PC-3 (cell line): ENCODE measurements at regions of chr16 and their contacts with region 1.

Region 1: DNA sequence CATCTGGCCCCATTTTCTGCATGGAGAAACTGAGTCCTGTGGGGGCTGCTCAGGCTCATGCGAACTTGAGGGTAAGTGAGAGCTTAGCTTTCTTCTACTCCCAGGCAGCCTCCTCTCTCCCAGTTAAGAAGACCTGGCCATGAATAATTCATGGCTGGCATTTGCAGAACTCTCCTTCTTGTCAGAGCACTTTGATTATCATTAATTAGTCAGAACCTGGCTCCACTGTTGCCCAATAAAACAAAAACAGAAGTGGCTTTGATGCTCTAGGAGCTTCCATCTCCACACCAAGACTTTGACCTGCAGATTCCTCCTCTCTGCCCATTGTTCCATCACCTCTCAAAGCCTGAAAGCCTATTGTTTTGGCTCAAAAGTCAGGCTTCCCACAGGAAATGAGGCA is 45.5 kb upstream of the CDH3 start:
- DNase-seq: no peak
- ATAC-seq: no peak
- H3K4me3 ChIP-seq: no peak overlapping the region
- H3K27ac ChIP-seq: no peak overlapping the region
- H3K4me1 ChIP-seq: 0 out of 2 replicates have a peak, but pooled peaks cover 4% of the 10 kb centered on the region
- H3K27me3 ChIP-seq: no peaks in the 10 kb centered on the region
- CTCF ChIP-seq: no peak

Region 2: GRCh38 chr16:68575082-68575481 is 24.5 kb before region 1 on chr16:
- CTCF ChIA-PET with region 1: no interaction called
- POLR2A ChIA-PET with region 1: interaction called, 11 read pairs
- intact Hi-C with region 1: no loop called
- DNase-seq: no peak
- ATAC-seq: no peak
- H3K4me3 ChIP-seq: no peak overlapping the region
- H3K27ac ChIP-seq: no peak overlapping the region
- H3K4me1 ChIP-seq: no peaks in the 10 kb centered on the region
- H3K27me3 ChIP-seq: no peaks in the 10 kb centered on the region
- CTCF ChIP-seq: no peak

Region 3: GRCh38 chr16:68626557-68626956 is 27.0 kb after region 1 on chr16:
- CTCF ChIA-PET with region 1: no interaction called
- POLR2A ChIA-PET with region 1: interaction called, 12 read pairs
- intact Hi-C with region 1: no loop called
- DNase-seq: no peak
- ATAC-seq: no peak
- H3K4me3 ChIP-seq: no peak overlapping the region
- H3K27ac ChIP-seq: no peak overlapping the region
- H3K4me1 ChIP-seq: no peaks in the 10 kb centered on the region
- H3K27me3 ChIP-seq: no peaks in the 10 kb centered on the region
- CTCF ChIP-seq: no peak

Region 4: DNA sequence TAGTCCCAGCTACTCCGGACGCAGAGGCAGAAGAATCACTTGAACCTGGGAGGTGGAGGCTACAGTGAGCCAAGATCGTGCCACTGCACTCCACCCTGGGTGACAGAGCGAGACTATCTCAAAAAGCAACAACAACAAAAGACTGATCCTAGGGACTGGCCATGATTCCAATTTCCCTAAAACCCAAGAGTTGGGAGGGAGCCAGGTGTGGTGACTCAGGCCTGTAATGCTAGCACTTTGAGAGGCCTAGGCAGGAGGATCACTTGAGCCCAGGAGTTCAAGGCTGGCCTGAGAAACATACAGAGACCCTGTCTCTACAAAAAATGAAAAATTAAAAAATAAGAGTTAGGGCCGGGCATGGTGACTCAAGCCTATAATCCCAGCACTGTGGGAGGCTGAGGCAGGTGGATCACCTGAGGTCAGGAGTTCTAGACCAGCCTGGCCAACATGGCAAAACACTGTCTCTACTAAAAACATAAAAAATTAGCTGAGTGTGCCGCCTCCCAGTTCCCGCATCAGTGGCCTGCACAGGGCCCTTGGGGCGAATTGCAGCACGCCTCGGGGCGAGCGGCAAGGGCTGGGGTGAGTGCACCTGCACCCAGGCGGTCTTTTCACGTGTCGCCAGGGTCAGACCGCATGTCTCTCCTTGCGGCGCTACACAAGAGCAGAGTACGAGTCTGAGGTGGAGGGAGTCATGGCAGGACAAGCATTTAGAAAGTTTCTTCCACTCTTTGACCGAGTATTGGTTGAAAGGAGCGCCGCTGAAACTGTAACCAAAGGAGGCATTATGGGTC is 86.3 kb after region 1 on chr16:
- CTCF ChIA-PET with region 1: no interaction called
- POLR2A ChIA-PET with region 1: no interaction called
- intact Hi-C with region 1: no loop called
- DNase-seq: peak; percentile 18
- ATAC-seq: no peak
- H3K4me3 ChIP-seq: no peak overlapping the region
- H3K27ac ChIP-seq: no peak overlapping the region
- H3K4me1 ChIP-seq: no peaks in the 10 kb centered on the region
- H3K27me3 ChIP-seq: no peaks in the 10 kb centered on the region
- CTCF ChIP-seq: no peak